ENCODE measurements at regions of chr9 and their contacts with region 1.

Region 1: GRCh38 chr9:114653556-114654159 is 3.9 kb downstream of the TEX53 start:
- DNase-seq: peak; percentile 55
- ATAC-seq: peak; percentile 98
- H3K4me3 Mint-ChIP-seq: no peak overlapping the region
- H3K27ac Mint-ChIP-seq: no peak overlapping the region
- H3K4me1 Mint-ChIP-seq: peaks cover 23% of the 10 kb centered on the region
- H3K27me3 Mint-ChIP-seq: no peaks in the 10 kb centered on the region
- CTCF ChIP-seq: peak; percentile 61

Region 2: GRCh38 chr9:114339130-114339908 is 314.3 kb before region 1 on chr9:
- CTCF ChIA-PET with region 1: interaction called, 11 read pairs
- POLR2A ChIA-PET with region 1: interaction called, 6 read pairs
- intact Hi-C with region 1: loop called (anchors 1 kb)
- DNase-seq: peak; percentile 68
- ATAC-seq: peak; percentile 79
- H3K4me3 Mint-ChIP-seq: peak overlapping the region; percentile 6
- H3K27ac Mint-ChIP-seq: peak overlapping the region; percentile 74
- H3K4me1 Mint-ChIP-seq: peaks cover 32% of the 10 kb centered on the region
- H3K27me3 Mint-ChIP-seq: no peaks in the 10 kb centered on the region
- CTCF ChIP-seq: peak; percentile 87

Region 3: GRCh38 chr9:114434878-114435311 is 218.8 kb before region 1 on chr9:
- CTCF ChIA-PET with region 1: interaction called, 96 read pairs
- POLR2A ChIA-PET with region 1: interaction called, 3 read pairs
- intact Hi-C with region 1: loop called (anchors 1 kb)
- DNase-seq: no peak
- ATAC-seq: peak; percentile 81
- H3K4me3 Mint-ChIP-seq: no peak overlapping the region
- H3K27ac Mint-ChIP-seq: no peak overlapping the region
- H3K4me1 Mint-ChIP-seq: no peaks in the 10 kb centered on the region
- H3K27me3 Mint-ChIP-seq: no peaks in the 10 kb centered on the region
- CTCF ChIP-seq: no peak

Region 4: DNA sequence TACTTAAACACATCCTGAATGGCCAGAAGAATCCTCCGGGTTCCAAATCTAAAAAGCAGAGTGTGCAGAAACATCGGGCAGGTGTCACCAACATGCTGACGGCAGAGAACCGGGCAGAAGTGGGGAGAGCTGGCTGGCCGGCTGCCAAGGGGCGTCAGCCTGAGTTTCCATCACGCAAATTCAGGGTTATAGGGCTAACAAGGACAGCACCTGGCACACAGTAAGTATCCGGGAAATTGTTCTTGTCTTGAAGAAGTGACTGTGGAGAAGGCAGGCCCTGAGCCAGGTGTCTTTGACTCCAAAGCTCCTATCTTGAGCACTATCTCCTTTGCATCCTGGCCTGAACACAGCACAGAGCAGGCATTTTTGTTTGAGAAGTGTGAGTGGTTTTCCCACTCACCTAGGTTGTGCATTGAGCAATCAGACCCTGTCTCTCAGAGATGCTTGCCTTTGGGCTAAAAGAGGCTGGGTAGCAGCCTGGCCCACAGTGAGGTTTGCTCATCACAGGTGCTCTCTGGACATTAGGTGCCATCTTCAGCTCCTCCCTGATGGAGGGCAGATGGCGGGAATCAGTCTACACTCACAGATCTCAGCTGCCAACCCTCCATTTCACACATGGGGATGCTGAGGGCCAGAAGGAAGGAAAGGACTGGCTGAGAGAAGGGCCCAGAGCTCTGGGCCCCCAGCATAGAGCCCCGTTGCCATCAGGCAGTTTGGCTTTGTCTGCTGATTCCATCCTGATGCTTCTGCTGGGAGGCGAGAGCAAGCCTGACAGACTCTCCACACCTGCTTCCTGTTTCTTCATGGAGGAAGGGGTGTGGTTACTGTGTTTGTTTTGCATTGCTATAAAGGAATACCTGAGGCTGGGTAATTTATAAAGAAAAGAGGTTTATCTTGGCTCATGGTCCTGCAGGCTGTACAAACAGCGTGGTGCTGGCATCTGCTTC is 201.2 kb before region 1 on chr9:
- CTCF ChIA-PET with region 1: interaction called, 13 read pairs
- POLR2A ChIA-PET with region 1: interaction called, 3 read pairs
- intact Hi-C with region 1: loop called (anchors 1 kb)
- DNase-seq: peak; percentile 61
- ATAC-seq: peak; percentile 35
- H3K4me3 Mint-ChIP-seq: peak overlapping the region; percentile 55
- H3K27ac Mint-ChIP-seq: peak overlapping the region; percentile 95
- H3K4me1 Mint-ChIP-seq: peaks cover 61% of the 10 kb centered on the region
- H3K27me3 Mint-ChIP-seq: no peaks in the 10 kb centered on the region
- CTCF ChIP-seq: no peak

Region 5: DNA sequence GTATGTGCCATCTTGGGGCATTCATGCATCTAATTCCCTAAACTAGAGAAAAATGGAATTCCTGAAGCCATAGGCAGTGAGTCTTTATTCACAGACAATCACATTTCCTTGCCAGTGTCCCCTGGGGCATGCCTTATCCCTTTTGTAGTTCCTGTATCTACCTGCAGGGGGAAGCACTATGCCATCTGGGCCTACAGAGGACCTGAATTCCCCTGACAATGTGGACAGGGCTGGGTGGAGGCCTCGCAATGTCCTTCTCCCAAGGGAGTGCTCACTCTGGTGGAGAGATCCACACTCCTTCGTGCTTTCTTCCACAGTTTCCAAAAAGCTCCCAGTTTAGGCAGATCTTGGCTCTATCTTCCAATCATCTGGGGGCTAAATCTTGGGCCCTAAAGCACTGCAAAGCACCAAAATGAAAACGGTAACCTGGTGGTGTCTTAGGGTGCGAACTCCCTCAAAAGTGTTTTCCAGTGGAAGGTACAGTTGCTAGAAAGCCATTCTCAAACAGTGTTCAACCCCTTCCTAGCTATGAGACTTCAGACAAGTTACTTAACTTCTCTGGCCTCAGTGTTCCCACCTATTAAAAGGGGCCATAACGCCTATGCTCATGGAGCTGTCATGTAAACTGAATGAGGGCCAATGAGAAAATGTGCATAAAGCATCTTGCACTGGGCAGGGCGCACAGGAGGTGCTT is 165.9 kb before region 1 on chr9:
- CTCF ChIA-PET with region 1: interaction called, 71 read pairs
- POLR2A ChIA-PET with region 1: no interaction called
- intact Hi-C with region 1: loop called (anchors 1 kb)
- DNase-seq: no peak
- ATAC-seq: peak; percentile 85
- H3K4me3 Mint-ChIP-seq: no peak overlapping the region
- H3K27ac Mint-ChIP-seq: no peak overlapping the region
- H3K4me1 Mint-ChIP-seq: peaks cover 39% of the 10 kb centered on the region
- H3K27me3 Mint-ChIP-seq: no peaks in the 10 kb centered on the region
- CTCF ChIP-seq: peak; percentile 41

Region 6: DNA sequence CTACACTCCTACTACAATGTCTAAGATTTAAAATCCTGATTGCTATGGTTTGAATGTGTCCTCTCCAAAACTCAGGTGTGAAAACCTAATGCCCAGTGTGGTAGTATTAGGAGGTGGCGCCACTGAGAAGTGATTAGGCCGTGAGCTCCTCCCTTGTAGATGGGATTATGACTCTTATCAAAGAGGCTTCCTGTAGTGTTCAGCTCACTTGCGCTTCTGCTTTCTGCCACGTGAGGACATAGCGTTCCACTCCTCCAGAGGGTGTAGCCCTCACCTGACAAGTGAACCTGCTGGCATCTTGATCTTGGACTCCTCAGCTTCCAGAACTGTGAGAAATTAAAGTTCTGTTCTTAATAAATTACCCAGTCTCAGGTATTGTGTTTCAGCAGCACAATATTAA is 115.4 kb before region 1 on chr9:
- CTCF ChIA-PET with region 1: interaction called, 89 read pairs
- POLR2A ChIA-PET with region 1: interaction called, 5 read pairs
- intact Hi-C with region 1: loop called (anchors 1 kb)
- DNase-seq: peak; percentile 19
- ATAC-seq: peak; percentile 100
- H3K4me3 Mint-ChIP-seq: no peak overlapping the region
- H3K27ac Mint-ChIP-seq: no peak overlapping the region
- H3K4me1 Mint-ChIP-seq: peaks cover 22% of the 10 kb centered on the region
- H3K27me3 Mint-ChIP-seq: no peaks in the 10 kb centered on the region
- CTCF ChIP-seq: no peak

Region 7: DNA sequence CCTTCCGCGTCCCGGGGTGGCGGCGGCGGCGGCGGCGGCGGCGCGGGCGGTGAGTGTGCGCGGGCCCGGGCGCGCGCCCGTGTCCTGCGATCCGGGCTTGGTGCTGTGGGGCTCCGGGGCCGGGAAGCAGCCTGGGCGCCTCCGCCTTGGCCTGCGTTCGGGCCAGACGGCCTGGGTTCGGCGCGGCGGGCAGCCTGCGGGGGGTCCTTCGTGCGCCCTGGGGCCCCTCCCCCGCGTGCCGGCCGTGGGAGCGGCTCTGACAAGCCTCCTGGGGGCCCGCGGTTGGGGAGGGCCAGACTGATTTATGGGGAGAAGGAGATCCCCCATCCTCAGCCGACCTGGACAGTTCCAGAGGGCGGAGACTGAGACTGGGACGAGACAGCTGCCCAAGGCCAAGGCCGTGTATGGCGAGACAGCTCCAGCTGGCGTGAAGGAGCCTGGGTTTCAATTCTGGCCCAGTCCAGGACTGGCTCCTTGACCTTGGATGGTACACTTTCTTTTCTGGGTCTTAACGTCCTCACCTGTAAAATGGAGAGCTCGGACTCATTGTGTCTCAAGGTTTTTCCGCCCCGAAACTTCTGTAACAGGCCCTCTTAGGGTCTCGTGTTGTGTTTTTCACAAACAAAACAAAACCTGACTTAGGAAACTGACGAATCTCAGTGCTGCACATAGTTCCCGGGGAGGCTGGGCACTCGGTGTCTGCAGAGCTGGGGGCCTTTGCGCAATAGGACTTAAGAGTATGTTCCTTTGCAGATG is 42.0 kb before region 1 on chr9:
- CTCF ChIA-PET with region 1: interaction called, 5 read pairs
- POLR2A ChIA-PET with region 1: interaction called, 4 read pairs
- intact Hi-C with region 1: loop called (anchors 1 kb)
- DNase-seq: no peak
- ATAC-seq: peak; percentile 51
- H3K4me3 Mint-ChIP-seq: peak overlapping the region; percentile 90
- H3K27ac Mint-ChIP-seq: peak overlapping the region; percentile 95
- H3K4me1 Mint-ChIP-seq: peaks cover 85% of the 10 kb centered on the region
- H3K27me3 Mint-ChIP-seq: no peaks in the 10 kb centered on the region
- CTCF ChIP-seq: no peak

Region 8: DNA sequence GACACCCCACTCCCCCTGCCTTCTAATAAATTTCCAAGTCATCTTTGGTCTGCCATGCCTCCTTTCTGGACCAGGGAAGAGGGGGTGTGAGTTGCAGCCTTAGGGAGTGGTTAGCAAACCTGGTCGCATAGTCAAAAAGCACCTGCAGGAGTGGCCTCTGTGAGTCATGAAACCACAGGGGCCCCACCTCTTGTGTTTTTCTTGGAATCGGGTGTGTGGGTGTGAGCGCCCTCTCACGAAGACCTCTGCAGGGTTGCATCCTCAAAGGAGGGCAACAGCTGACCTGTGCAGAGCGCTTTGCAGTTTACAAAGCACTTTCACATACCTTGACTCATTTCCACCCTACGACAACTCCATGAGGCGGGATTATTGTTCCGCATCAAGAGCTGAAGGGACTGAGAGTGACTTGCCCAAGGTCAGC is 65.2 kb after region 1 on chr9:
- CTCF ChIA-PET with region 1: no interaction called
- POLR2A ChIA-PET with region 1: no interaction called
- intact Hi-C with region 1: no loop called
- DNase-seq: no peak
- ATAC-seq: peak; percentile 42
- H3K4me3 Mint-ChIP-seq: no peak overlapping the region
- H3K27ac Mint-ChIP-seq: no peak overlapping the region
- H3K4me1 Mint-ChIP-seq: peaks cover 6% of the 10 kb centered on the region
- H3K27me3 Mint-ChIP-seq: peaks cover 27% of the 10 kb centered on the region
- CTCF ChIP-seq: no peak

Measured in activated B cell treated with CpG ODN at 0.5 μM for 24 hours (primary cell).